Aorta (tissue), 5 donors: ENCODE measurements at regions of chr16 and their contacts with region 1.

Region 1: DNA sequence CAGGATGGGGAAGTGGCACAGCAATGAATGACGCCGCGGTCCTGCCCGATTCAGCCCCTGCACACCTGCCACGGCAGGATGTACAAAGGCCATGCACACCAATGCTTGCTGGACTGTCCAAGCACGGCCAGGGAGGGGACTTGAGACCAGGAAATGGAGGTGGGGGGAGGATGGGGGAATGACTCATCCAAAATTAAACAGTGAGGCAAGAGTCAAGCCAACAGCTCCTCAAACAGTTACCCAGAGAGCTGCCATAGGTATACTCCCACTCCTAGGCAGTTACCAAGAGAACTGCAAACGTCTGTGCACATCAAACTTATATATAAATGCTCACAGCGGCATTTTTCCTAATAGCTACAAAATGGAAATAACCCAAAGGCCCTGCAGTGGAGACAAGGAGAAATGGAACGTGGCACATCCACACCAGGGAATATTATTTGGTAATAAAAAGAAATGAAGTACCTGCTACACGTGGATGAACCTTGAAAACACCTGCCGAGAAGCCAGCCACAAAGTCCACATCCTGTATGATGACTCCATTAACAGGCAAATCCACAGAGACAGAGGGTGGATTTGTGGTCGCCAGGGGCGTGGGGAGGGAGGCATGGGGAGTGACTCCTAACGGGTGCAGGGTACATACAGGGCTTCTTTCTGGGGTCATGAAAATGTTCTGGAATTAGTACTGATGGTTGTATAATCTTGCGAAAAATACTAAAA is 54.1 kb downstream of the VAC14 start:
- DNase-seq: peak; percentile 81 to 85
- ATAC-seq: peak; percentile 85
- H3K4me3 ChIP-seq: no peak overlapping the region
- H3K27ac ChIP-seq: peak overlapping the region; percentile 88 to 97
- H3K4me1 ChIP-seq: peaks cover 0 to 4% of the 10 kb centered on the region in 2 donors
- H3K27me3 ChIP-seq: no peaks in the 10 kb centered on the region

Region 2: GRCh38 chr16:70444249-70445063 is 302.4 kb before region 1 on chr16:
- intact Hi-C with region 1: no loop called
- DNase-seq: no peak
- ATAC-seq: peak; percentile 47
- H3K4me3 ChIP-seq: no peak overlapping the region
- H3K27ac ChIP-seq: no peak overlapping the region
- H3K4me1 ChIP-seq: no peaks in the 10 kb centered on the region
- H3K27me3 ChIP-seq: no peaks in the 10 kb centered on the region

Region 3: DNA sequence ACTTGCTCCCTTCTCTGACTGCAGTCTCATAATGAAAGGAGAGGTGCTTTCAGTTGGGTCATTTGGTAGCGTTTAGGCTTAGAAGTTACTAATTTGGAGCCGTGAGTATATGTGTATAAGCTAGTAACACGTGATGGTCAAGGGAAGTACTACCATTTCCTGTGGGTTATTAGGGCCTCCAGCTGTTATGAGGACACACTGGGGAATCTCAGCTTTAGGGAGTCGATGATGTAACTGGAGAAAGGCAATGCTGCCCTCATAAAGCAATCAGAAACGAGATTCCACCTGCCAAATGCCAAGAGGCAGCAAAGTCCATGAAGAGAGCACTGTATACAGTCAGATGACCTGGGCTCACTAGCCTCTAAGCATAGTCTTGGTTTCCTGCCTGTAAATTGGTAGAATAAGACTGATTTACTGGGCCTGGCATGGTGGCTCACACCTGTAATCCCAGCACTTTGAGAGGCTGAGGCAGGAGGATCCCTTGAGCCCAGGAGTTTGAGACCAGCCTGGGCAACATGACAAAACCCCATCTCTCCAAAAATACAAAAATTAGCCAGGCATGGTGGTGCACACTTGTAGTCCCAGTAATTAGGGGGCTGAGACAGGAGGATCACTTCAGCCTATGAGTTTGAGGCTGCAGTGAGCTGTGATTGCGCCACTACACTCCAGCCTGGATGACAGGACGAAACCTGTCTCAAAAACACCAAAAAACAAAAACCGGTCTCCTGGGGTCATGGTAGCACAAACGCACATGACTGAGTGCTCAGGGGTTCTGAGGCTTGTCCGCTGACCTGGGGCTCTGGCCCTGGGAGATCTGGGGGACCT is 170.2 kb before region 1 on chr16:
- intact Hi-C with region 1: loop called in 1 of 2 experiments (anchors 10 kb)
- DNase-seq: no peak
- ATAC-seq: no peak
- H3K4me3 ChIP-seq: no peak overlapping the region
- H3K27ac ChIP-seq: peak overlapping the region; percentile 69 to 94
- H3K4me1 ChIP-seq: peaks cover 7% of the 10 kb centered on the region in 2 donors
- H3K27me3 ChIP-seq: no peaks in the 10 kb centered on the region

Region 4: GRCh38 chr16:70685938-70686375 is 60.9 kb before region 1 on chr16 and contains the start of gene MTSS2:
- intact Hi-C with region 1: loop called in 1 of 2 experiments (anchors 5 kb)
- DNase-seq: peak; percentile 91 to 97
- ATAC-seq: peak; percentile 79
- H3K4me3 ChIP-seq: peak within 1 kb of the TSS; percentile 63 to 90
- H3K27ac ChIP-seq: peak within 1 kb of the TSS; percentile 29 to 92
- H3K4me1 ChIP-seq: no peaks in the 10 kb centered on the region
- H3K27me3 ChIP-seq: no peaks in the 10 kb centered on the region
- total RNA-seq, gene MTSS2: 65.7 to 87.4 TPM

Region 5: DNA sequence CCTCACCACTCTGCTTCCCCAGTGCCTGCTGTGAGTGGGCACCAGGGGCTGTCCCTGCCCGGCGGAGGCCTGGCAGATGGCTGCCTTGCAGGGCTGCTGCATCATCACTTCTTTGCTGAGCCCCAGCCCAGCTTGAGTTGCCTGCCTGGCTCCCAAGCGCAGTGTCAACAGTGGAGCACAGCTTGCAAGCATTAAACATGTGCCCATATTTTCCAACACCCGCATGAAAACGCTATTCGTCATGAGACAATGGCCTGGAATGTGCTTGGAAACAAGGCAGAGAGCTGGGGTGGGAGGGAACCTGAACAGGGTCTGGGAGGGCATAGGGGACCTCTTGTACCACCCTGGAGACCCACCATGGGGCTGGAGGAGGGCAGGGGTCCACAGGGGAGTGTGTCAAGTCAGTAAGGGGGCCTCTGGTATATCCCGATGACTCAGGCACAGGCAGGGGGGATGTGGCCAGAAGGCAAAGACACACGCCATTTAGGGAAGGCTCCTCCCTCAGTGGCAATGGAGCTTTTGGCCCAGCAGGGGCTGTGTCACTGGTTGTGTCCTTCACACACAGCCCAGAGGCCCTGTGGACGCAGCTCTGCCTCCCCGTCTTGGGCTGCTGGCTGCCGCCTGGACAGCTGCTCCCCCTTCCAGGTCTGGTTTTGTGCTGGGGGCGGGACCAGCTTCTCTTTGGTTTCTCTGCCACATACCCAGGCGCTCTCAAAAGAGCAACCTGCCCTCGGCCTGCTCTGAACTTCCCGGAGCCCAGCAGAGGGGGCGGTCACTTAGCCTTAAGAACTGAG is 43.6 kb before region 1 on chr16:
- intact Hi-C with region 1: loop called in 1 of 2 experiments (anchors 5 kb)
- DNase-seq: peak; percentile 89 to 92
- ATAC-seq: peak; percentile 68
- H3K4me3 ChIP-seq: no peak overlapping the region
- H3K27ac ChIP-seq: peak overlapping the region; percentile 95 to 96
- H3K4me1 ChIP-seq: peaks cover 0 to 4% of the 10 kb centered on the region in 2 donors
- H3K27me3 ChIP-seq: no peaks in the 10 kb centered on the region

Region 6: GRCh38 chr16:70715055-70715858 is 31.6 kb before region 1 on chr16:
- intact Hi-C with region 1: loop called in 1 of 2 experiments (anchors 5 kb)
- DNase-seq: peak; percentile 95 to 98
- ATAC-seq: peak; percentile 83
- H3K4me3 ChIP-seq: no peak overlapping the region
- H3K27ac ChIP-seq: peak overlapping the region; percentile 47 to 83
- H3K4me1 ChIP-seq: no peaks in the 10 kb centered on the region
- H3K27me3 ChIP-seq: no peaks in the 10 kb centered on the region